Transverse colon (tissue), 4 donors: ENCODE measurements at regions of chr14 and their contacts with region 1.

Region 1: GRCh38 chr14:84303140-84303539 is 1226.8 kb upstream of the FLRT2 start:
- DNase-seq: no peak
- H3K4me3 ChIP-seq: no peak overlapping the region
- H3K27ac ChIP-seq: no peak overlapping the region
- H3K4me1 ChIP-seq: no peaks in the 10 kb centered on the region
- H3K27me3 ChIP-seq: no peaks in the 10 kb centered on the region
- CTCF ChIP-seq: no peak
- EP300 ChIP-seq: no peak
- POLR2A ChIP-seq: no peak

Region 2: GRCh38 chr14:84403572-84403971 is 100.4 kb after region 1 on chr14:
- in situ Hi-C with region 1: no loop called
- intact Hi-C with region 1: no loop called
- DNase-seq: no peak
- H3K4me3 ChIP-seq: no peak overlapping the region
- H3K27ac ChIP-seq: no peak overlapping the region
- H3K4me1 ChIP-seq: no peaks in the 10 kb centered on the region
- H3K27me3 ChIP-seq: no peaks in the 10 kb centered on the region
- CTCF ChIP-seq: no peak
- EP300 ChIP-seq: no peak
- POLR2A ChIP-seq: no peak

Region 3: GRCh38 chr14:84520711-84521338 is 217.7 kb after region 1 on chr14:
- in situ Hi-C with region 1: no loop called
- intact Hi-C with region 1: loop called (anchors 5 kb)
- DNase-seq: no peak
- H3K4me3 ChIP-seq: no peak overlapping the region
- H3K27ac ChIP-seq: no peak overlapping the region
- H3K4me1 ChIP-seq: no peaks in the 10 kb centered on the region
- H3K27me3 ChIP-seq: no peaks in the 10 kb centered on the region
- CTCF ChIP-seq: no peak
- EP300 ChIP-seq: no peak
- POLR2A ChIP-seq: no peak